Naive thymus-derived CD4-positive, alpha-beta T cell (primary cell): ENCODE measurements at regions of chr15 and their contacts with region 1.

Region 1: GRCh38 chr15:74373731-74374647 is 6.5 kb upstream of the CYP11A1 start:
- DNase-seq: peak; percentile 82 to 94 (median 91)
- ATAC-seq: peak; percentile 97
- H3K4me3 ChIP-seq: peak overlapping the region; percentile 98
- H3K4me3 Mint-ChIP-seq: peak overlapping the region; percentile 68 to 89 (median 84)
- H3K27ac ChIP-seq: peak overlapping the region; percentile 62
- H3K27ac Mint-ChIP-seq: peak overlapping the region; percentile 18 to 82 (median 40)
- H3K4me1 ChIP-seq: peaks cover 9% of the 10 kb centered on the region in 2 donors
- H3K4me1 Mint-ChIP-seq: peaks cover 0 to 32% (median 15%) of the 10 kb centered on the region in 7 donors
- H3K27me3 ChIP-seq: no peaks in the 10 kb centered on the region
- H3K27me3 Mint-ChIP-seq: peaks cover 0 to 31% (median 5%) of the 10 kb centered on the region in 5 donors

Region 2: DNA sequence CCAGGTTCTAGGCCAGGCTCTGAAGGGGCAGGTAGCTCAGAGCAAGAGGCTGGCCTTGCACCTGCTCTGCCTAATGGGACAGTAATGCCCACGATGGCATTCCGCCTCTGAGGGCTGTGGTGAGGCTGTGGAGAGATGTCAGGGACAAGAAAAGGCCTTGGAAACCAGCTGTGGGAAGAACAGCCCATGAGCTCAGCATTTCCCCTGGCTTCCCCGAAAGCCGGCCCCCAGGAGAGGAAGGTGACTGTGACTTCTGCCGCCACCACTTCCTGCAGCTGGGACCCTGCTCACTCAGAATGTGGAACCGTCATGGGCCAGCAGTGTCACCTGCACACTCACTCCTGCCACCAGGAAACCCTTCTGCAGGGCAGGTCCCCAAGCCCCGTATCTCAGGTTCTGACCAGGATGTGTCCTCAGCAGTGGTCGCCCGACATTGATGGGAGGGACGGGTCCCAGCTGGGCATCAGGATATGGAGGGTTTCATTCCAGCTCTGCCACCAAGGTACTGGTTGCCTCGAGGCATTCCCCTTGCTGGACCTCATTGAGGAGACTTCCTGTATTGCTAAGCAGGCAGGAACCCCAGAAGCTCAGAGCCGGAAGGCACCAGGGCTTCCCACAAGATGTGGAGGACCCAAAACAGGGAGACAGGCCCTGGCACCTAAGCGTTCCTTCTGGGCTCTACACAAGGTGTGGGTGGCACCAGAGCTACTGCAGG is 29.0 kb after region 1 on chr15:
- CTCF ChIA-PET with region 1: interaction called, 3 read pairs
- POLR2A ChIA-PET with region 1: interaction called, 4 read pairs
- intact Hi-C with region 1: loop called in 1 of 2 experiments (anchors 2 kb)
- DNase-seq: peak in 6 of 9 donors; percentile 26 to 80 (median 32)
- ATAC-seq: peak; percentile 75
- H3K4me3 ChIP-seq: peak overlapping the region; percentile 10
- H3K4me3 Mint-ChIP-seq: peak overlapping the region in 9 of 10 donors; percentile 19 to 67 (median 49)
- H3K27ac ChIP-seq: no peak overlapping the region
- H3K27ac Mint-ChIP-seq: peak overlapping the region in 7 of 9 donors; percentile 2 to 85 (median 49)
- H3K4me1 ChIP-seq: peaks cover 43 to 57% of the 10 kb centered on the region in 2 donors
- H3K4me1 Mint-ChIP-seq: peaks cover 40 to 70% (median 53%) of the 10 kb centered on the region in 7 donors
- H3K27me3 ChIP-seq: no peaks in the 10 kb centered on the region
- H3K27me3 Mint-ChIP-seq: no peaks in the 10 kb centered on the region

Region 3: GRCh38 chr15:74433592-74434262 is 59.7 kb after region 1 on chr15 and contains the start of gene SEMA7A:
- CTCF ChIA-PET with region 1: interaction called, 74 read pairs
- POLR2A ChIA-PET with region 1: interaction called, 5 read pairs
- intact Hi-C with region 1: loop called (anchors 1 kb)
- DNase-seq: peak; percentile 32 to 90 (median 53)
- ATAC-seq: peak; percentile 87
- H3K4me3 ChIP-seq: peak within 1 kb of the TSS; percentile 50
- H3K4me3 Mint-ChIP-seq: peak within 1 kb of the TSS; percentile 72 to 88 (median 78)
- H3K27ac ChIP-seq: no peak within 1 kb of the TSS
- H3K27ac Mint-ChIP-seq: peak within 1 kb of the TSS in 4 of 9 donors; percentile 65 to 89 (median 72)
- H3K4me1 ChIP-seq: peaks cover 6 to 35% of the 10 kb centered on the region in 2 donors
- H3K4me1 Mint-ChIP-seq: peaks cover 7 to 57% (median 16%) of the 10 kb centered on the region in 7 donors
- H3K27me3 ChIP-seq: no peaks in the 10 kb centered on the region
- H3K27me3 Mint-ChIP-seq: peaks cover 0 to 3% (median 0%) of the 10 kb centered on the region in 5 donors
- total RNA-seq, gene SEMA7A: 1.6 to 15.7 (median 5.0) TPM

Region 4: DNA sequence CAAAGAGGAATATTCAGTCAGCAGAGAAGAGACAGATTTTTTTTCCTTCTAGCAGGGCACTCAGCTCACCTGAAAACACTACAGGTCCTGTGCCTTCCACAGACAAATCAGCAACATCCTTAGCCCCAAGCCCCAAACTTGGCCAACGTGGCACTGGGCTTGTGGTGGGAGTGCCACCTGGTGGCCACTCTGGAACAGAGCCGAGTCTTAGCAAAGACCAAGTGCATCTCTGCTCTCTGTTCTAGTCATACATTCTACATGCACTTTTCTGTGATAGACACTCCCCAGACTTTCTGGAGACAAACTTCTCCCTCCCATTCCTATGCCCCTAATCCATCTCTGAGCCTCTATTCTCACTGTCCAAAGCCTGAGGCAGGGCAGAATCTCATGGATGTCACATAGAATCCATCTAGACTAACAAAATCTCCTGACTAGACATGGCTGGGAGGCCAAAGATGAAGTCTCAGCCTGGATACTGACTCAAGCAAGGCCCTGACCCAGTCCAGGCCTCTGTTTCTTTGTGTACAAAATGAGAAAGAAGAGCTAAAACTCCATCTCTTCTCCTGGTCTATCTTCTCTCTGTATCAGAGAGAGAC is 64.8 kb after region 1 on chr15:
- CTCF ChIA-PET with region 1: interaction called, 74 read pairs
- POLR2A ChIA-PET with region 1: interaction called, 5 read pairs
- intact Hi-C with region 1: loop called (anchors 1 kb)
- DNase-seq: peak; percentile 52 to 76 (median 72)
- ATAC-seq: peak; percentile 84
- H3K4me3 ChIP-seq: no peak overlapping the region
- H3K4me3 Mint-ChIP-seq: no peak overlapping the region
- H3K27ac ChIP-seq: no peak overlapping the region
- H3K27ac Mint-ChIP-seq: peak overlapping the region in 3 of 9 donors; percentile 11 to 55 (median 43)
- H3K4me1 ChIP-seq: peaks cover 6 to 11% of the 10 kb centered on the region in 2 donors
- H3K4me1 Mint-ChIP-seq: peaks cover 7 to 30% (median 15%) of the 10 kb centered on the region in 7 donors
- H3K27me3 ChIP-seq: no peaks in the 10 kb centered on the region
- H3K27me3 Mint-ChIP-seq: no peaks in the 10 kb centered on the region

Region 5: DNA sequence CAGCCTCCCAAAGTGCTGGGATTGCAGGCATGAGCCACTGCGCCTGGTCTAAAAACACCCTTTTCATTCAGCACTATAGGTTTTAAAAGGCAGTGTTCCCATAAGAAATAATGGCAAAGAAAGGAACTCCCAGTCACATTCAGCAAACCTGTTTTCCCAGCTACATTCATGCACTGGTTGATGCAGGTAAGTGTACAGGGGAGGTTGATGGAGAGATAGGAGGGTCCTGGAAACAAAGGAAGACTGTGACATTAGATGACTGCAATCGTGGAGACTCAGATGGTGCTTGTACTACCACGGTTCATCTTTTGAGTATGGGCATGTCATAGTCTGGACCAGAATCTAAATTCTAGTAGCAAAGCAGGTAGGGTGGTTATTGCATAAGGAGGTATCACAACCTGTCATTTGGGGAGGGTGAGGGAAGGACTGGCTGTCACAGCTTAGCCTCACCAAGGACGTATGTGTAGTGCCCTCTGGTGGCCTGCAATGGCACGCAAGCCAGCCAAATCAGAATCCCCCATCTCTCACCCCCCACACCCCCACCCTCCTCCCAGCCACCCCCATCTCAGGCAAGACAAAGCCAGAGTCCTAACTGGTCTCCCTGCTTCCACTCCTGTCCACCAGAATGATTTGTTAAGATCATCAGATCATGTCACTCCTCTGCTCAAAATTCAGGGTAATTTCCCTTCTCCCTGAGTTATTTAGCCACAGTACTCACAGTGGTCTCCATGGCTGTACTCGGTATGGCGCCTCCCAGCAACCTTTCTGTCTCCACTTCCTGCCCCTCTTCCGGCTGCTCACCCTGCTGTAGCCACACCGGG is 115.7 kb after region 1 on chr15:
- CTCF ChIA-PET with region 1: interaction called, 6 read pairs
- POLR2A ChIA-PET with region 1: interaction called, 3 read pairs
- intact Hi-C with region 1: loop called (anchors 1 kb)
- DNase-seq: peak; percentile 26 to 67 (median 51)
- ATAC-seq: peak; percentile 97
- H3K4me3 ChIP-seq: no peak overlapping the region
- H3K4me3 Mint-ChIP-seq: peak overlapping the region in 7 of 10 donors; percentile 7 to 40 (median 25)
- H3K27ac ChIP-seq: no peak overlapping the region
- H3K27ac Mint-ChIP-seq: peak overlapping the region in 6 of 9 donors; percentile 39 to 71 (median 62)
- H3K4me1 ChIP-seq: peaks cover 5 to 11% of the 10 kb centered on the region in 2 donors
- H3K4me1 Mint-ChIP-seq: peaks cover 7 to 20% (median 13%) of the 10 kb centered on the region in 7 donors
- H3K27me3 ChIP-seq: no peaks in the 10 kb centered on the region
- H3K27me3 Mint-ChIP-seq: no peaks in the 10 kb centered on the region

Region 6: DNA sequence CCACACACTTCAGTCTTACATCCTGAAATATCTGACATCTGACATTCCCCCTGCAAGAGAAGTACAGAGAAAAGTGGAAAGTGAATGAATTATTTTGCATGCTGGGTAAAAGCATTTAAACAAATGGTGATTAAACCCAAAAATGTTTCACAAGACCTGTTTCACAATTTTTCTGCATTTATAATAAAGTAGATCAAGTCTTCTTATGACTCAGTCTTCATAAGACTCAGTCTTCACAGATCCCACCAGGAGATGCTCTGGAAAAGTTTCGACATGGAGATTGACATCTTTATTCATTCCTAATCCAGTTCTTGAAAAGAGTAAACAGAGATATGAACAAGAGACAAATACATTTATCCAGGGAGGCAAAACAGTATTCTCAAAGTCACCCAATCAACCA is 335.0 kb after region 1 on chr15:
- CTCF ChIA-PET with region 1: no interaction called
- POLR2A ChIA-PET with region 1: no interaction called
- intact Hi-C with region 1: no loop called
- DNase-seq: no peak
- ATAC-seq: no peak
- H3K4me3 ChIP-seq: no peak overlapping the region
- H3K4me3 Mint-ChIP-seq: no peak overlapping the region
- H3K27ac ChIP-seq: no peak overlapping the region
- H3K27ac Mint-ChIP-seq: no peak overlapping the region
- H3K4me1 ChIP-seq: no peaks in the 10 kb centered on the region
- H3K4me1 Mint-ChIP-seq: peaks cover 0 to 8% (median 4%) of the 10 kb centered on the region in 7 donors
- H3K27me3 ChIP-seq: no peaks in the 10 kb centered on the region
- H3K27me3 Mint-ChIP-seq: peaks cover 0 to 19% (median 0%) of the 10 kb centered on the region in 5 donors

Region 7: DNA sequence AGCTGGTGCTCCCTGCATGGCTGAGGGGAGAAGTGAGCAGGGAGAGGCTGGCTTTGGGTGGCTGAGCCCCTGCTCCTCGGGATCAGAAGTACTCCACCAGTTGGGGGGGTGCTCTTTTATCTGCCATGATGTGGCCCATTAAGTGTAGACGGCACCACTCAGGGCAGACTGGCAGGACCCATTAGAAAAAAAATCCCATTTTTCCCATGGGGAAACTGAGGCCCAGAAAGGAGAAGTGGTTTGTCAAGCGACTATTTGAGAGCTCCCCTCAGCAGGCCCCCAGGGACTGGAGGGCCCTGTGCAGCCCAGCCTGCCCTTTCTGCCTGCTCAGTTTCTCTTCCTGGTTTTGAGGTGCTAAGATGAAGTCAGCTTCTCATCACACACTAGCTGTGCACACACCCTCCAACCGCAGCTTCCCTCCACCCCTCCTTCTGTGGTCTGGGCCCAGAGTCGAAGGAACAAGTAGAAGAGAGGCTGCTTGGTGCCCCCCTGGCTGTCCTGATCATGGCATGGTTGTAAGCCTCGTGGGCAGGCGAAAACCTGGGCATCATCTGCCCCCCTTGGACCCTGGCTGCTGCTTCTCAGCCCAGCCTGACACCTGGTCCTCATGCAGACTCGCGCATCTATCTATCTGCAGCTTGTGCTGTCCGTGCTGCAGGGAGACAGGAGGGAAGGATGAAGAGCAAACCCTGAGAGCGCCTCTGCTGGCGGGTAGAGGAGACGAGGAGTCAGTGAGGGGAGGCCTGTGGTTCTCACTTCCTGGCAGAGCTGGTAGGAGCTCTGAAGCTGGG is 413.5 kb after region 1 on chr15:
- CTCF ChIA-PET with region 1: no interaction called
- POLR2A ChIA-PET with region 1: no interaction called
- intact Hi-C with region 1: loop called in 1 of 2 experiments (anchors 5 kb)
- DNase-seq: peak; percentile 69 to 97 (median 96)
- ATAC-seq: peak; percentile 85
- H3K4me3 ChIP-seq: peak overlapping the region; percentile 85
- H3K4me3 Mint-ChIP-seq: peak overlapping the region; percentile 87 to 97 (median 93)
- H3K27ac ChIP-seq: peak overlapping the region; percentile 92
- H3K27ac Mint-ChIP-seq: peak overlapping the region; percentile 95 to 99 (median 98)
- H3K4me1 ChIP-seq: peaks cover 66 to 72% of the 10 kb centered on the region in 2 donors
- H3K4me1 Mint-ChIP-seq: peaks cover 57 to 78% (median 75%) of the 10 kb centered on the region in 7 donors
- H3K27me3 ChIP-seq: no peaks in the 10 kb centered on the region
- H3K27me3 Mint-ChIP-seq: no peaks in the 10 kb centered on the region

Region 8: DNA sequence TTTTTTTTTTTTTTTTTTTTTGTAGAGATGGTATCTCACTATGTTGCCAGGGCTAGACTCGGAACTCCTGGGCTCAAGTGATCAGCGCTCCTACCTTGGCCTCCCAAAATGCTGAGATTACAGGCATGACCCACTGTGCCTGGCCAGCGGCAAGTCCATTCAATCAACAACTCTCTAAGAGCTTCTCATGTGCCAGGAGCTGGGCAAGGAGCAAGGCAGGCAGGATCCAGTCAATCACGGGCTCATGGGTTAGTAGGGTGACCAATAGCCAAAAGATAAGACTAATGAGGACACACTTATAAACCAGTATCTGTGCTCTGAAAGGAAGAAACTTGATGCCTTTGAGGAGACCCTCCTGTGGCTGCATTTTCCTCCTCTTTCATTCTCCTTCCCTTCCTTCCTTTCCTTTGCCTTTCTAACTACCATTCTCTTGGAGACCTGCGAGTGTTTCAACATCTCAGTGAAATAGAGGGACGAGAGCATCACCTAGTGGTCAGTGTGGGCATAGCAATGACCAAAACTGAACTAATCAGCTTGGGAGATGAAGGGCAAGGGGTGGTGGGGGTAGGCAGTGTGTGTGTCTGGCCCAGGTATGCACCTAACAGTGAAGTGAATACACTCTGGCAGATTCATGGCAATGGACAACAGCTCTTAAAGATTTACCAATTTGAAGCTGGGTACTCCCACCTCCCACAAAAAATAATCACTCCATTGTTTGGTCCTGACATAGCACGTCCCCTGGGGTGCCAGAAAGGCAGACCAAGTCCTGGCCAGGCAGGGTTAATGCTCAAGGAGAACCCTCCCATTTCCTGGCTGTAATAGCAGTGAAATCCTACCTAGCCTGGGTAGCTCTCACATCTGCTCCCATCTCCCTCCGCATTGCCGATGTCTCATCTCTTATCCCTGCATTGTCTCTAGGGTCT is 576.4 kb after region 1 on chr15:
- CTCF ChIA-PET with region 1: interaction called, 3 read pairs
- POLR2A ChIA-PET with region 1: no interaction called
- intact Hi-C with region 1: loop called (anchors 1 to 5 kb)
- DNase-seq: peak; percentile 54 to 82 (median 75)
- ATAC-seq: peak; percentile 97
- H3K4me3 ChIP-seq: no peak overlapping the region
- H3K4me3 Mint-ChIP-seq: no peak overlapping the region
- H3K27ac ChIP-seq: no peak overlapping the region
- H3K27ac Mint-ChIP-seq: peak overlapping the region in 2 of 9 donors; percentile 28 to 54
- H3K4me1 ChIP-seq: no peaks in the 10 kb centered on the region
- H3K4me1 Mint-ChIP-seq: peaks cover 4 to 17% (median 10%) of the 10 kb centered on the region in 7 donors
- H3K27me3 ChIP-seq: no peaks in the 10 kb centered on the region
- H3K27me3 Mint-ChIP-seq: peaks cover 0 to 3% (median 0%) of the 10 kb centered on the region in 5 donors